CD8-positive, alpha-beta T cell (primary cell): ENCODE measurements at regions of chr3 and their contacts with region 1.

Region 1: DNA sequence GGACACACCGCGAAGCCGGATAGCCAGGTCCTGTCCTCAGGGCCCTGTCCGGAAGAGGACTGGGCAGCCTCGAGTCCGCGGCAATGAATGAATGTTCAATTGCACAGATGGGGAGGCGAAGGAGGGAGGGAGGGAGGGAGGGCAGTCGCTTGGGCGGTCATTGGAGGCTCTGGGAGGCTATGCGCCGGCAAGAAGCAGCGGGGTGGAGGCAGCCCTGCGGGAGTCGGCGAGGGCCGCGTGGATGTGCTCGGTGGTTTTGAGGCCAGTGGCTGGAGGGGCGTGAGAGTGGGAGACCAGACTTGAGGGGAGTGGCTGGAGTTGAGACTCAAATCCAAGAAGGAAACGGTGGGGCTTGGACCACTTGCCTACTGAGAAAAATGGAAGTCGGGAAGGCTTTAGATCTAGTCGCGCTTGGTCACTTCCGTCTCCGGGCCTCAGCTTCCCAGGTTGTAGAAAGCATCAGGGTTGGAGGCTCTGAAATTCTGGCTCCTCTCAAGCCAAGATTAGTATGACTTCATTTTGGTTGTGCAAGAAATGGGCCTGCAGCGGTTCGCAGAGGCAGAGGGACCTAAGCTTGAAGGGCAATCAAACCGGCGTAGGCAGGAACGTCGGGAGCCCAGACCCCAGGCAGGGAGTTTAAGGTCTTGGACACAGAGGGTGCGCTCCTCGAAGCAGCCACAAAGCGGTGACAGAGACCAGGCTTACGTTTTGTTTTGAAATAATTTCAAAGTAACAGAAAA is 21.1 kb upstream of the PLXND1 start:
- DNase-seq: peak; percentile 34 to 80 (median 66)
- ATAC-seq: peak; percentile 82
- H3K4me3 ChIP-seq: peak overlapping the region; percentile 60 to 67
- H3K4me3 Mint-ChIP-seq: peak overlapping the region; percentile 88
- H3K27ac ChIP-seq: peak overlapping the region; percentile 44
- H3K27ac Mint-ChIP-seq: peak overlapping the region; percentile 72
- H3K4me1 ChIP-seq: peaks cover 13% of the 10 kb centered on the region
- H3K4me1 Mint-ChIP-seq: peaks cover 18% of the 10 kb centered on the region
- H3K27me3 ChIP-seq: no peaks in the 10 kb centered on the region
- H3K27me3 Mint-ChIP-seq: no peaks in the 10 kb centered on the region
- CTCF ChIP-seq: peak; percentile 74

Region 2: GRCh38 chr3:129490242-129491045 is 137.2 kb before region 1 on chr3:
- CTCF ChIA-PET with region 1: interaction called, 43 read pairs
- POLR2A ChIA-PET with region 1: interaction called, 4 read pairs
- intact Hi-C with region 1: loop called (anchors 1 kb)
- DNase-seq: peak; percentile 27 to 79 (median 49)
- ATAC-seq: peak; percentile 97
- H3K4me3 ChIP-seq: no peak overlapping the region
- H3K4me3 Mint-ChIP-seq: no peak overlapping the region
- H3K27ac ChIP-seq: no peak overlapping the region
- H3K27ac Mint-ChIP-seq: no peak overlapping the region
- H3K4me1 ChIP-seq: no peaks in the 10 kb centered on the region
- H3K4me1 Mint-ChIP-seq: peaks cover 2% of the 10 kb centered on the region
- H3K27me3 ChIP-seq: no peaks in the 10 kb centered on the region
- H3K27me3 Mint-ChIP-seq: no peaks in the 10 kb centered on the region
- CTCF ChIP-seq: peak; percentile 72

Region 3: GRCh38 chr3:129616713-129617112 is 10.9 kb before region 1 on chr3:
- CTCF ChIA-PET with region 1: interaction called, 12 read pairs
- POLR2A ChIA-PET with region 1: no interaction called
- intact Hi-C with region 1: no loop called
- DNase-seq: peak in 1 of 9 experiments; percentile 47
- ATAC-seq: no peak
- H3K4me3 ChIP-seq: no peak overlapping the region
- H3K4me3 Mint-ChIP-seq: no peak overlapping the region
- H3K27ac ChIP-seq: no peak overlapping the region
- H3K27ac Mint-ChIP-seq: no peak overlapping the region
- H3K4me1 ChIP-seq: no peaks in the 10 kb centered on the region
- H3K4me1 Mint-ChIP-seq: peaks cover 7% of the 10 kb centered on the region
- H3K27me3 ChIP-seq: no peaks in the 10 kb centered on the region
- H3K27me3 Mint-ChIP-seq: peaks cover 2% of the 10 kb centered on the region
- CTCF ChIP-seq: no peak

Region 4: GRCh38 chr3:129645290-129645689 is 17.7 kb after region 1 on chr3:
- CTCF ChIA-PET with region 1: interaction called, 13 read pairs
- POLR2A ChIA-PET with region 1: no interaction called
- intact Hi-C with region 1: loop called in 1 of 2 experiments (anchors 1 kb)
- DNase-seq: no peak
- ATAC-seq: no peak
- H3K4me3 ChIP-seq: no peak overlapping the region
- H3K4me3 Mint-ChIP-seq: no peak overlapping the region
- H3K27ac ChIP-seq: no peak overlapping the region
- H3K27ac Mint-ChIP-seq: no peak overlapping the region
- H3K4me1 ChIP-seq: no peaks in the 10 kb centered on the region
- H3K4me1 Mint-ChIP-seq: peaks cover 2% of the 10 kb centered on the region
- H3K27me3 ChIP-seq: no peaks in the 10 kb centered on the region
- H3K27me3 Mint-ChIP-seq: no peaks in the 10 kb centered on the region
- CTCF ChIP-seq: no peak

Region 5: GRCh38 chr3:129824926-129825541 is 197.4 kb after region 1 on chr3:
- CTCF ChIA-PET with region 1: interaction called, 71 read pairs
- POLR2A ChIA-PET with region 1: interaction called, 3 read pairs
- intact Hi-C with region 1: loop called (anchors 1 kb)
- DNase-seq: peak in 7 of 9 experiments; percentile 11 to 76 (median 47)
- ATAC-seq: peak; percentile 63
- H3K4me3 ChIP-seq: no peak overlapping the region
- H3K4me3 Mint-ChIP-seq: no peak overlapping the region
- H3K27ac ChIP-seq: no peak overlapping the region
- H3K27ac Mint-ChIP-seq: no peak overlapping the region
- H3K4me1 ChIP-seq: peaks cover 10% of the 10 kb centered on the region
- H3K4me1 Mint-ChIP-seq: peaks cover 27% of the 10 kb centered on the region
- H3K27me3 ChIP-seq: no peaks in the 10 kb centered on the region
- H3K27me3 Mint-ChIP-seq: no peaks in the 10 kb centered on the region
- CTCF ChIP-seq: peak; percentile 72

Region 6: GRCh38 chr3:129934234-129935123 is 306.9 kb after region 1 on chr3:
- CTCF ChIA-PET with region 1: interaction called, 31 read pairs
- POLR2A ChIA-PET with region 1: no interaction called
- intact Hi-C with region 1: loop called in 1 of 2 experiments (anchors 1 kb)
- DNase-seq: peak in 8 of 9 experiments; percentile 5 to 63 (median 40)
- ATAC-seq: peak; percentile 62
- H3K4me3 ChIP-seq: no peak overlapping the region
- H3K4me3 Mint-ChIP-seq: no peak overlapping the region
- H3K27ac ChIP-seq: no peak overlapping the region
- H3K27ac Mint-ChIP-seq: no peak overlapping the region
- H3K4me1 ChIP-seq: no peaks in the 10 kb centered on the region
- H3K4me1 Mint-ChIP-seq: peaks cover 8% of the 10 kb centered on the region
- H3K27me3 ChIP-seq: no peaks in the 10 kb centered on the region
- H3K27me3 Mint-ChIP-seq: peaks cover 3% of the 10 kb centered on the region
- CTCF ChIP-seq: peak; percentile 85